MCF 10A (cell line): ENCODE measurements at regions of chr7 and their contacts with region 1.

Region 1: GRCh38 chr7:100691676-100692577 is 2.1 kb downstream of the GIGYF1 start:
- DNase-seq: peak; percentile 82
- H3K4me3 Mint-ChIP-seq: peak overlapping the region; percentile 93
- H3K27ac Mint-ChIP-seq: peak overlapping the region; percentile 92
- H3K4me1 Mint-ChIP-seq: peaks cover 19% of the 10 kb centered on the region
- H3K27me3 Mint-ChIP-seq: no peaks in the 10 kb centered on the region
- CTCF ChIP-seq: peak; percentile 81

Region 2: GRCh38 chr7:100469227-100470044 is 222.5 kb before region 1 on chr7:
- CTCF ChIA-PET with region 1: interaction called, 22 read pairs
- POLR2A ChIA-PET with region 1: no interaction called
- intact Hi-C with region 1: loop called (anchors 5 kb)
- DNase-seq: peak; percentile 64
- H3K4me3 Mint-ChIP-seq: no peak overlapping the region
- H3K27ac Mint-ChIP-seq: no peak overlapping the region
- H3K4me1 Mint-ChIP-seq: peaks cover 5% of the 10 kb centered on the region
- H3K27me3 Mint-ChIP-seq: no peaks in the 10 kb centered on the region
- CTCF ChIP-seq: peak; percentile 94

Region 3: GRCh38 chr7:100563809-100564400 is 128.0 kb before region 1 on chr7:
- CTCF ChIA-PET with region 1: interaction called, 87 read pairs
- POLR2A ChIA-PET with region 1: interaction called, 3 read pairs
- intact Hi-C with region 1: loop called (anchors 1 kb)
- DNase-seq: peak; percentile 60
- H3K4me3 Mint-ChIP-seq: no peak overlapping the region
- H3K27ac Mint-ChIP-seq: no peak overlapping the region
- H3K4me1 Mint-ChIP-seq: no peaks in the 10 kb centered on the region
- H3K27me3 Mint-ChIP-seq: no peaks in the 10 kb centered on the region
- CTCF ChIP-seq: peak; percentile 78

Region 4: GRCh38 chr7:100604028-100604975 is 87.6 kb before region 1 on chr7:
- CTCF ChIA-PET with region 1: interaction called, 3 read pairs
- POLR2A ChIA-PET with region 1: no interaction called
- intact Hi-C with region 1: loop called (anchors 5 kb)
- DNase-seq: peak; percentile 55
- H3K4me3 Mint-ChIP-seq: peak overlapping the region; percentile 72
- H3K27ac Mint-ChIP-seq: no peak overlapping the region
- H3K4me1 Mint-ChIP-seq: peaks cover 5% of the 10 kb centered on the region
- H3K27me3 Mint-ChIP-seq: no peaks in the 10 kb centered on the region
- CTCF ChIP-seq: peak; percentile 33

Region 5: DNA sequence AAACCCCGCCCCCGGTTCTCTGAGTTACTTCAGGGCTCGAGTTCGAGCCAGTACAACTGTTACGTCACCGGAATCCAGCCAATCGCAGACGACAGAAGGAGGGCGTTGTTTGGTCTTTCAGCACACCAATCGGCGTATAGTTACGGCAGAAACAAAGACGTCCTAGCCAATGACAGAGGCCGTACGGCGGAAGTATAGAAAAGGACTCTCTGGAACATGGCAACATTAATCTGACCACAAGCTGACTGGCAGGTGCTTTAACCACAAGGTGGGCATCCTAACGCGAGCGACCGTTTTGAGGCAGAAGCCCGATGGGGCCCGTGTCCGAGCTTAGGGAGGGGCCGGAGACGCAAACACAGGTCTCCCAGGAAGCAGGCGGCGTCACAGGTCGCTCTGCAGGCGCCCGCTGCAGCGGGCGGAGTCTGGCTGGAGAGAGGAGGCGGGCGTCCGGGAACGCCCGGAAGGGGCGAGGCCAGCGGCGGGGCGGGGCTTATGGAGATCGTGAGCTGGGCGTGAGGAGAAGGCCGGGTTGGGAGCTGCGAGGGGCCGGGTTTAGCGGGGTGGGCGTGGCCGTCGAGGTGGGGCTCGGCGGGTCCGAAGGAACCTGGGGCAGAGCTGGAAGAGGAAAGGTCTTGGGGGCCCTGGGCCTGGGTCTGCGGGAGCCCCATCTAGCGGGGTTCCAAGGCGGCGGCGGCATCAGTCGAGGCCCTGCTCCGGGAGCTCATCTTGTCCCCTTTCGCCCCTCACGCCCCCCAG is 79.8 kb before region 1 on chr7 and contains the start of gene MOSPD3:
- CTCF ChIA-PET with region 1: interaction called, 21 read pairs
- POLR2A ChIA-PET with region 1: interaction called, 11 read pairs
- intact Hi-C with region 1: no loop called
- DNase-seq: peak; percentile 99
- H3K4me3 Mint-ChIP-seq: peak within 1 kb of the TSS; percentile 92
- H3K27ac Mint-ChIP-seq: peak within 1 kb of the TSS; percentile 99
- H3K4me1 Mint-ChIP-seq: peaks cover 6% of the 10 kb centered on the region
- H3K27me3 Mint-ChIP-seq: no peaks in the 10 kb centered on the region
- CTCF ChIP-seq: no peak
- total RNA-seq, gene MOSPD3: 5.2 and 7.4 TPM in 2 replicates

Region 6: DNA sequence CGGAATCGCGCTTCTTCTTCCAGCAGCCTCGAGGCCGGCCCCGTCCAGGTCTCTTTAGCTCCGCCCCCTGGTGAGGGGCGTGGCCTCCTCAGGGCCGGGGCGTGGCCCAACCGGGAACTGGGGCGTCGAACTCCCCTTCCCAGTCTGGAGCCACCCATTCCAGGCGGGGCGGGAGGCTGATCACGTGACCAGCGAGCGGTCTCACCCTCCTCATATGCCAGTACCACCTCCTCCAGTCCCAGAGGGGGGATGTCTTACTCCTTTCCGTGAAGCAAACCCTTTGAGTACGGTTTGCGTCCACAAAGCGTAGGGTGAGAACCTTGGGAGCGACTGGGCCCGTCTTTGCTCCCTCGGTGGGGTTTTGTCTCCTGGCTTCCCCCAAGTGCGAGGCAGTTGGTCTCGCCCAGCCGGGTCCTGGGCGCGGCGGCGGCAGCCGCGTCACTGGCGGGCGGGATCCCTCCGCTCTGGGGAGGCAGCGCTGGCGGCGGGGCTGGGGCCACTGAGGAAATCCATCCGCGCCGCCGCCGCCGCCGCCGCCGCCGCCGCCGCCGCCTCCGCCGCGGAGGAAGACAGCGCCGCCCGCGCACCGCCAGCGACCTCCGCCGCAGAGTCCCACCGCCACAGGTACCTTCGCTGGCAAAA is 18.5 kb before region 1 on chr7 and contains the start of gene GNB2:
- CTCF ChIA-PET with region 1: interaction called, 103 read pairs
- POLR2A ChIA-PET with region 1: interaction called, 25 read pairs
- intact Hi-C with region 1: no loop called
- DNase-seq: peak; percentile 99
- H3K4me3 Mint-ChIP-seq: peak within 1 kb of the TSS; percentile 76
- H3K27ac Mint-ChIP-seq: peak within 1 kb of the TSS; percentile 94
- H3K4me1 Mint-ChIP-seq: peaks cover 11% of the 10 kb centered on the region
- H3K27me3 Mint-ChIP-seq: no peaks in the 10 kb centered on the region
- CTCF ChIP-seq: no peak
- total RNA-seq, gene GNB2: 196 and 201 TPM in 2 replicates

Region 7: DNA sequence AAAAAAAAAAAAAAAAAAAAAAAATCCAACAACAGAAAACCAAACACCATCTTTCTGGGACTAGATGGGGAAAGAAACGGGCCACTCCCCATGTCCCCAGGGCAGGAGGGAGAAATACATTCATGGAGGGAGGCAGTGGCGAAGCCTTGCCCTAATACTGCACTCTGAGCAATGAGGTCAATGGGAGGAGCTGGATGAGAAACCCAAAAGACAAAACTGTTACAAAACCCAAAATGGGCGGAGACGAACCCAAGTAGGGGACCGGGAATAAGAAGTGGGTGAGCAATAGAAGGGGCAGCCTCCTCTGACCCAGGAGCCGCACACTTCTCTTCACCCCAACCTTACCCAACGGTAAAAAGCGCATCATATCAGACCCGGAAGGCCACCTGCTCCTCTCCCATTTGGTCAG is 11.8 kb before region 1 on chr7:
- CTCF ChIA-PET with region 1: interaction called, 103 read pairs
- POLR2A ChIA-PET with region 1: interaction called, 25 read pairs
- intact Hi-C with region 1: no loop called
- DNase-seq: peak; percentile 78
- H3K4me3 Mint-ChIP-seq: no peak overlapping the region
- H3K27ac Mint-ChIP-seq: peak overlapping the region; percentile 51
- H3K4me1 Mint-ChIP-seq: peaks cover 12% of the 10 kb centered on the region
- H3K27me3 Mint-ChIP-seq: no peaks in the 10 kb centered on the region
- CTCF ChIP-seq: no peak